ENCODE measurements at regions of chr7 and their contacts with region 1.

Region 1: DNA sequence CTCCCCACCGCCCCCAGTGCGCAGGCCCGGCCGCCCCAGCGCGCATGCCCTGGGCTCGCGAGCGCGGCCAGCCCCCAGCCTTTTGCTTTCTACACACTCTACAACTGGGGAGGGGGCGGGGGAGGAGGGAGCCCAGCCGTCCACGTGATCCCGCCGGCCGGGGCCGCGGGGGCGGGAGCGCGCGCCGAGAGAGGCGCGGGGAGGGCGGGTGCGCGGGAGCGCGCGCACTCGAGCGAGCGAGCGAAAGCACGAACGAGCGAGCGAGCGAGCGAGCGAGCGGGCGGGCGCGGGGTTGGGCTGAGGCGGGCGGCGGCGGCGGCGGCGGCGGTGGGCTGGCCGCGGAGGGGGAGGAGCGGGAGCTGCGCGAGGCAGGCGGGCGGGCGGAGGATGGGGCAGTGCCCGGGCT is at the start of gene AUTS2:
- DNase-seq: peak; percentile 82 to 98 (median 86)

Region 2: GRCh38 chr7:68904630-68905029 is 693.5 kb before region 1 on chr7:
- intact Hi-C with region 1: no loop called
- DNase-seq: no peak

Region 3: GRCh38 chr7:69338144-69338543 is 259.9 kb before region 1 on chr7:
- intact Hi-C with region 1: no loop called
- DNase-seq: no peak

Region 4: GRCh38 chr7:69517985-69518704 is 79.9 kb before region 1 on chr7:
- intact Hi-C with region 1: loop called (anchors 5 kb)
- DNase-seq: peak in 8 of 10 donors; percentile 12 to 87 (median 33)

Region 5: DNA sequence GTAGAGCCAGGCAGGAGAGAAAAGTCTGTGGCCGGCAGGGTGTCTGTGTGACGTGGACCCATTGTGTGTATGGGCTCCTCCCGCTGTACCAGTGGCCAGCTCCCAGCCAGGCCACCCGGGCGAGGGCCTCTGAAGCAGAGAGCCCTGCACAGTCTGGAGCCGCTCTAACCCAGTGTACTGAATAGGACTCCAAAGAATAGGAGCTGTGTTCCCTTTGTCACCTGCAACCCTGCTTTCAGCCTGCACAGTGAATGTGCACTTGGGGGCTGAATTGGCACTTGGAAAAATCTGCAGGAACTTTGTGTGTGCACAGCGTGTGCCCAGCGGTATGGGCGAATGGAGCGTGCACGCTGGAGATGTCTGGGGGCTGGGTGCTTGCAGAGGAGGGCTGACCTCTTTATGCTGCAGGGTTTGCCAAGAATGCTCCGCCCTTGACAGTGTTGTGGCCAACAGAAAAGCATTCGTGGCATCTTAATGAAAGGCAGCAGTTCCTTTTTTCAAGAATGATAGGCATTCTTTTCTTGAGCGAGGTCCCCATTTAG is 216.4 kb after region 1 on chr7:
- intact Hi-C with region 1: loop called (anchors 5 kb)
- DNase-seq: peak; percentile 63 to 97 (median 77)

Region 6: DNA sequence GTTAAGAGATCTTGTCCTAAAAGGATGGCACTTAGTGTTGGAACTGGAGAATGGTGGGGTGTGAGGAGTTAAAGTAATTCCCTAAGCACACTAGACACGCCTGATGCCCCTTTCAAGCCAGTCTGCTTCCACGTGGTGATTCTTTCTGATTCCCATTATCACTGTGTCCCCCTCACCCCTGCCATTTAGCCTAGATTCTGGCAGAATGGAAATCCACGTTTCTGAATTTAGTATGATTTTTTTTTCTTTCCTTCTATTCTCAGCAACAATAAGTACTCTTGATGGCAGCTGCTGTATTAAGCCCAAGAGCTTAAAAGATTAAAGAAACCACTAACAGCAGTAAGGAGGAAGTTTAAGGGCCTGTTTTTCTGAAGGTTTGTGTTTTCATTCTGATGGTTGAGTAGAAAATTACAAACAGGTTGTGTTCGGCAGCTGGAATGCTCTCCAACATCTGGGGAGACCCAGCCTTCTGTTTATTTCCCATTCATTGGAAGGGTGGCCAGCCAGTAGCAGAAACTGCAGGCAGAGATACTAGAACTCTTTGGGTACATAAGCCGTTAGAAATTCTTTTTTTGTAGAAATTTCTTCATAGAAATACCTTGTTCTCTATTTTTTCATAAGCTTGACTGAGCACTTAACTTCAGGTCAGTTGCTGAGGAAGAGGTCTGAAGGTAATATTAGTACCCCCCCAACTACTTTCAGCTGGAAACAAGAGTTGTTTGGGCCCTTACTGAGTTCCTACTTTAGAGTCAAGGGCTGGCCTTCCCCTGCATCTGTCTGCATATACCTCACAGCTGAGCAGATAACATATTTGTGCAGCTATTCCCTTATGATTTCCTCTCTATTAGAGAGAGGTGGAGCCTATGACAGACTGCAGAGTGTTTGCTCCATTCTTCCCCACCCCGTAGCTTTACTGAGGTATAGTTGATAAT is 355.3 kb after region 1 on chr7:
- intact Hi-C with region 1: no loop called
- DNase-seq: no peak

Measured in posterior cingulate gyrus (tissue), 11 donors.